CD8-positive, alpha-beta T cell (primary cell): ENCODE measurements at regions of chr20 and their contacts with region 1.

Region 1: DNA sequence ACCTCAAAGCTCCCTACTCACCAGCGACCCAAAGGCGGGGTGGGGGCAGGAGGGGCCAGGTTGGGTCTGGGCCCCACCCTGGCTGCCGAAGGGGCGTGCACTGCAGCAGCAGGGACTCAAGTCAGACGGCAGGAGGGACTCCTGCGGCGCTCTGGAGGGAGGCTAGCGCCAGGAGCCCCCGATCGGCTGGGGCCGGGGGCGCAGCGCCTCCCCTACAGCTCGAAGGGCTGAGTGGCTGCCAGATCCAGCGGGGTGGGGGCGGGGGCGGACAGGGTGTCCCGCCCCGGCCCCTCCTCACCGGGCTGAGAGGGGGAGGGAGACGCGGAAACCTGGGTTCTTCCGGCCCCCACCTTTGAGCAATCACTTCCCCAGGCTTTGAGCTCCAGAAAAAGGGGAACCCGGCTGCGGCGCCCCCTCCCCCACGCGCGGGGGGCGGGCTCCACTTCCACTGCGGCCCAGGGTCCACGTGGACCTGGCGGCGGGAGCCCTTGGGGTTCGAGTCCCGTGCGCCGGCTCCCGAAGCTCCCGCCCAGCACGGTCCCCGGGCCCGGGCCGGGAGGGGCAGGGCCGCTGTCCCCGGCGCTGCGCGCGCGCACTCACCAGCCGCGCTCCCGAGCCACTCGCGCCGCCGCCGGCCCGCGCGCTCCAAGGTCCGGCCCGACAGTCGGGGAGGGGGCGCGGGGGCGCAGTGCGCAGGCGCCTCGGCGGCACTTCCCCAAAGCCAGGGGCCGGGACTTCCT is at the start of gene RGS19:
- DNase-seq: peak in 8 of 9 experiments; percentile 50 to 85 (median 69)
- ATAC-seq: peak; percentile 32
- H3K4me3 ChIP-seq: peak within 1 kb of the TSS; percentile 85 to 95
- H3K4me3 Mint-ChIP-seq: peak within 1 kb of the TSS; percentile 87
- H3K27ac ChIP-seq: peak within 1 kb of the TSS; percentile 66 to 77
- H3K27ac Mint-ChIP-seq: peak within 1 kb of the TSS; percentile 90
- H3K4me1 ChIP-seq: peaks cover 57% of the 10 kb centered on the region
- H3K4me1 Mint-ChIP-seq: peaks cover 39% of the 10 kb centered on the region
- H3K27me3 ChIP-seq: peaks cover 0 to 1% of the 10 kb centered on the region in 2 experiments
- H3K27me3 Mint-ChIP-seq: peaks cover 2% of the 10 kb centered on the region
- CTCF ChIP-seq: no peak
- total RNA-seq, gene RGS19: 6.9 to 8.1 TPM

Region 2: GRCh38 chr20:63930971-63931553 is 148.4 kb before region 1 on chr20:
- CTCF ChIA-PET with region 1: no interaction called
- POLR2A ChIA-PET with region 1: no interaction called
- intact Hi-C with region 1: no loop called
- DNase-seq: no peak
- ATAC-seq: no peak
- H3K4me3 ChIP-seq: no peak overlapping the region
- H3K4me3 Mint-ChIP-seq: no peak overlapping the region
- H3K27ac ChIP-seq: no peak overlapping the region
- H3K27ac Mint-ChIP-seq: no peak overlapping the region
- H3K4me1 ChIP-seq: no peaks in the 10 kb centered on the region
- H3K4me1 Mint-ChIP-seq: peaks cover 12% of the 10 kb centered on the region
- H3K27me3 ChIP-seq: no peaks in the 10 kb centered on the region
- H3K27me3 Mint-ChIP-seq: no peaks in the 10 kb centered on the region
- CTCF ChIP-seq: no peak

Region 3: DNA sequence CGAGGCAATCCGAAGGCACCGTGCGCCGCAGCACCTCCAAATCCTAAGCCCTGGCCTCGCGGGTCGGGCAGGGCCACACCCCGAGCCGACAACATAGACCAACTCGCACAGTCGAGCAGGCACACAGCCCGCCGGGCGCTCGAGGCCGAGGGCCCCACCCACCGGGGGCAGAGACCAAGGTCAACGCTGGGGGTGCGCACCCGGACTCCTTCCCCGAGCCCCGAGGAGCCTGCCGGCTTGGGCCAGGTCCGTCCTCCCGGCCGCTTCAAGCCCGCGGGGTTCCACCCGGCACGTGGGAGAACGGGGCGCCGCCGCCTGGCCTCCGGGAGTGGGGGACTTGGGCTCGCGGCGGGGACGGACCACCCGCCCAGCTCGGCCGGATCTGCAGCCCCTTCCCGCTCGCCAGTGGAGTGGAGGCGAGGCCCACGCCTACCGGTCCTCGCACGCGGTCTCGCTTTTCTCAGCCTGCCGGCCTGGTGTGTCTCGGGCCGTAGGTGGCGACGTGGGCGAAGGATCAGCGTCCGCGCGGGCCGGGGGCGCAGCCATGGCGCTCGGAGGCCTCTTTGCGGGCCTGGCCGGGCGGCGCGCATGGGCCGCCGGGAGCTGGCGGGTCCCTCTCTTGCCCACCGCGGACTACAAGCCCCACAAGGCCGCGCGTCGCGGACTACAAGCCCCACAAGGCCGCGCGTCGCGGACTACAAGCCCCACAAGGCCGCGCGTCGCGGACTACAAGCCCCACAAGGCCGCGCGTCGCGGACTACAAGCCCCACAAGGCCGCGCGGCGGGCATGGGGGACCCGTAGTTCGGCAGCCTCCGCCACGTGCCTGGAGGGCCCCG is 123.4 kb before region 1 on chr20 and contains the start of gene UCKL1:
- CTCF ChIA-PET with region 1: no interaction called
- POLR2A ChIA-PET with region 1: no interaction called
- intact Hi-C with region 1: loop called in 1 of 2 experiments (anchors 5 kb)
- DNase-seq: peak; percentile 78 to 93 (median 89)
- ATAC-seq: peak; percentile 81
- H3K4me3 ChIP-seq: peak within 1 kb of the TSS; percentile 73 to 95
- H3K4me3 Mint-ChIP-seq: peak within 1 kb of the TSS; percentile 82
- H3K27ac ChIP-seq: peak within 1 kb of the TSS; percentile 64 to 77
- H3K27ac Mint-ChIP-seq: peak within 1 kb of the TSS; percentile 76
- H3K4me1 ChIP-seq: peaks cover 28% of the 10 kb centered on the region
- H3K4me1 Mint-ChIP-seq: peaks cover 34% of the 10 kb centered on the region
- H3K27me3 ChIP-seq: no peaks in the 10 kb centered on the region
- H3K27me3 Mint-ChIP-seq: no peaks in the 10 kb centered on the region
- CTCF ChIP-seq: no peak
- total RNA-seq, gene UCKL1: 29.6 to 33.7 TPM

Region 4: GRCh38 chr20:64038565-64039292 is 40.7 kb before region 1 on chr20:
- CTCF ChIA-PET with region 1: interaction called, 27 read pairs
- POLR2A ChIA-PET with region 1: interaction called, 5 read pairs
- intact Hi-C with region 1: no loop called
- DNase-seq: peak; percentile 57 to 91 (median 78)
- ATAC-seq: peak; percentile 78
- H3K4me3 ChIP-seq: peak overlapping the region; percentile 45 to 76
- H3K4me3 Mint-ChIP-seq: peak overlapping the region; percentile 78
- H3K27ac ChIP-seq: peak overlapping the region in 1 of 2 experiments; percentile 45
- H3K27ac Mint-ChIP-seq: no peak overlapping the region
- H3K4me1 ChIP-seq: peaks cover 75% of the 10 kb centered on the region
- H3K4me1 Mint-ChIP-seq: peaks cover 39% of the 10 kb centered on the region
- H3K27me3 ChIP-seq: peaks cover 0 to 3% of the 10 kb centered on the region in 2 experiments
- H3K27me3 Mint-ChIP-seq: no peaks in the 10 kb centered on the region
- CTCF ChIP-seq: peak; percentile 67

Region 5: GRCh38 chr20:64101731-64102621 is 22.5 kb after region 1 on chr20:
- CTCF ChIA-PET with region 1: interaction called, 7 read pairs
- POLR2A ChIA-PET with region 1: no interaction called
- intact Hi-C with region 1: loop called (anchors 1 to 2 kb)
- DNase-seq: peak; percentile 42 to 81 (median 69)
- ATAC-seq: peak; percentile 63
- H3K4me3 ChIP-seq: peak overlapping the region; percentile 8 to 39
- H3K4me3 Mint-ChIP-seq: peak overlapping the region; percentile 26
- H3K27ac ChIP-seq: no peak overlapping the region
- H3K27ac Mint-ChIP-seq: no peak overlapping the region
- H3K4me1 ChIP-seq: peaks cover 16% of the 10 kb centered on the region
- H3K4me1 Mint-ChIP-seq: peaks cover 23% of the 10 kb centered on the region
- H3K27me3 ChIP-seq: peaks cover 6 to 8% of the 10 kb centered on the region in 2 experiments
- H3K27me3 Mint-ChIP-seq: peaks cover 14% of the 10 kb centered on the region
- CTCF ChIP-seq: peak; percentile 85

Region 6: DNA sequence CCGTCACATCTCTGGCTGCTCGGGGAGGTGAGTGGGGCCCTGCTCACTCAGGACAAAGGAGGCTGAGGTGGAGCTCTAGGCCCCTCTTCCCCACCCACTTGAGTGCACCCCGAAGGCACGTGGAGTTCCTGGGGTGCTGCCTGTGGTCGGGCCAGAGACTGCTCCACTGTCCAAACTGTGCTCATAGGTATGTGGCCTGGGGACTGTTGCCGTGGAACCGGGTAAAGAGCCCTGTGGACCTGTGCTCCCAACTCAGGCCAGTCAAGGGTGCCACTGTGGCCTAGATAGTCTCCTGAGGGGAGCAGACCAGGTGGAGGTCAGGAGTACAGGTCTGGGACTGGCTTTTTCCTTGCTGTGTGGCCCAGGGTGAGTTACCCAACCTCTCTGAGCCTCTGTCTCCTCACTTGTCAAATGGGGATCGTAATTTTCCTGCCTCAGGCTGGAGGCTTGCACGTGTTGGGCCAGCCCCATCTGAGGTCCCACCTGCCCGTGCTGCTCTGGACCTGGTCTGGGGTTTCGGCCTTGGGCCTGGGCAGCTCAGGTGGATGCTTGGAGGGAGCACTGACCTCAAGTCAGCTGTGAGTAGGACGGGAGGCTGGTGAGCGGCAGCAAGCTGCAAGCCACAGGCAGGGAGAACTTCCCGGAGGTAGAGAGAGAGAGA is 40.4 kb after region 1 on chr20:
- CTCF ChIA-PET with region 1: interaction called, 103 read pairs
- POLR2A ChIA-PET with region 1: interaction called, 5 read pairs
- intact Hi-C with region 1: loop called in 1 of 2 experiments (anchors 1 kb)
- DNase-seq: peak in 3 of 9 experiments; percentile 2 to 50 (median 27)
- ATAC-seq: peak; percentile 4
- H3K4me3 ChIP-seq: peak overlapping the region; percentile 36 to 38
- H3K4me3 Mint-ChIP-seq: peak overlapping the region; percentile 72
- H3K27ac ChIP-seq: peak overlapping the region in 1 of 2 experiments; percentile 39
- H3K27ac Mint-ChIP-seq: peak overlapping the region; percentile 62
- H3K4me1 ChIP-seq: peaks cover 9% of the 10 kb centered on the region
- H3K4me1 Mint-ChIP-seq: peaks cover 8% of the 10 kb centered on the region
- H3K27me3 ChIP-seq: peaks cover 0 to 3% of the 10 kb centered on the region in 2 experiments
- H3K27me3 Mint-ChIP-seq: peaks cover 4% of the 10 kb centered on the region
- CTCF ChIP-seq: no peak

Region 7: GRCh38 chr20:64255361-64256281 is 176.2 kb after region 1 on chr20 and contains the start of gene PCMTD2:
- CTCF ChIA-PET with region 1: no interaction called
- POLR2A ChIA-PET with region 1: interaction called, 3 read pairs
- intact Hi-C with region 1: loop called in 1 of 2 experiments (anchors 5 kb)
- DNase-seq: peak; percentile 62 to 95 (median 87)
- ATAC-seq: peak; percentile 84
- H3K4me3 ChIP-seq: peak within 1 kb of the TSS; percentile 71 to 82
- H3K4me3 Mint-ChIP-seq: peak within 1 kb of the TSS; percentile 89
- H3K27ac ChIP-seq: peak within 1 kb of the TSS; percentile 70 to 72
- H3K27ac Mint-ChIP-seq: peak within 1 kb of the TSS; percentile 94
- H3K4me1 ChIP-seq: peaks cover 52% of the 10 kb centered on the region
- H3K4me1 Mint-ChIP-seq: peaks cover 52% of the 10 kb centered on the region
- H3K27me3 ChIP-seq: peaks cover 0 to 4% of the 10 kb centered on the region in 2 experiments
- H3K27me3 Mint-ChIP-seq: peaks cover 10% of the 10 kb centered on the region
- CTCF ChIP-seq: no peak
- total RNA-seq, gene PCMTD2: 56.3 to 64.1 TPM